ENCODE measurements at regions of chr9 and their contacts with region 1.

Region 1: DNA sequence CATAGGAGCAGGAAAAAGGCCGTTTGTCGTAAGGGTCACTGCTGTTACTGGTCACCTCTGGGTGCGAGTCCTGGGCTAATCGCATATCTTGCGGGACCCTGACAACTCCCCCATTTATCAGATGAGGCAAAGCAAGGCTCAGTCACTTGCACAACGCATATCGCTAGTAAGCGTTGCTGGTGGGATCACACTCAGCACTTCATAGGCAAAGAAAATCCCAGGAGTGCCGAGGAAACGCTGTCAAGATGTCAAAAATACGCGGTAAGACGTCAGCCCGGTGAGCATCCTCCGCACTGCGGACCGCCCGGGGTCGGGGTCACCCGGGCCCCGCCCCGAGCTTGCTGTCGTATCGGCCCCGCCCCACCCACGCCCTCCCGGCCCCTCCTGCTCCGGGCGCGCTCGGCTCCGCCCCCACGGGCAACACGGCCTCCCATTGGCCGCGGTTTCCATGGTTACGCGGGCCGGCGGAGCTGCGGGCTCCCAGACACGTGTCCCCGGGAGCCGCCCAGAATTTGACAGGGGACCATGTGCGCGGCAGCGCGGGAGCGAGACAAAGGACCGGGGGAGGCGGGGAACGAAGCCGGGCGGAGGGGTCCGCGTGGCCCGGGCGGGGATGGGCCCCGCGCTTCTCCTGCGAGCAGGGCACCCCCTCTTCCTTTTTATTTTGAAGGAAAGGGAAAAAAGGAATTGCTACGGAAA is 80.2 kb upstream of the IER5L start:
- DNase-seq: peak; percentile 77 to 97 (median 87)
- ATAC-seq: peak; percentile 89
- H3K4me3 ChIP-seq: peak overlapping the region; percentile 51
- H3K4me3 Mint-ChIP-seq: peak overlapping the region; percentile 80
- H3K27ac ChIP-seq: no peak overlapping the region
- H3K27ac Mint-ChIP-seq: no peak overlapping the region
- H3K4me1 ChIP-seq: peaks cover 34% of the 10 kb centered on the region
- H3K4me1 Mint-ChIP-seq: peaks cover 47% of the 10 kb centered on the region
- H3K27me3 ChIP-seq: peaks cover 0 to 3% of the 10 kb centered on the region in 2 experiments
- H3K27me3 Mint-ChIP-seq: no peaks in the 10 kb centered on the region
- CTCF ChIP-seq: no peak

Region 2: DNA sequence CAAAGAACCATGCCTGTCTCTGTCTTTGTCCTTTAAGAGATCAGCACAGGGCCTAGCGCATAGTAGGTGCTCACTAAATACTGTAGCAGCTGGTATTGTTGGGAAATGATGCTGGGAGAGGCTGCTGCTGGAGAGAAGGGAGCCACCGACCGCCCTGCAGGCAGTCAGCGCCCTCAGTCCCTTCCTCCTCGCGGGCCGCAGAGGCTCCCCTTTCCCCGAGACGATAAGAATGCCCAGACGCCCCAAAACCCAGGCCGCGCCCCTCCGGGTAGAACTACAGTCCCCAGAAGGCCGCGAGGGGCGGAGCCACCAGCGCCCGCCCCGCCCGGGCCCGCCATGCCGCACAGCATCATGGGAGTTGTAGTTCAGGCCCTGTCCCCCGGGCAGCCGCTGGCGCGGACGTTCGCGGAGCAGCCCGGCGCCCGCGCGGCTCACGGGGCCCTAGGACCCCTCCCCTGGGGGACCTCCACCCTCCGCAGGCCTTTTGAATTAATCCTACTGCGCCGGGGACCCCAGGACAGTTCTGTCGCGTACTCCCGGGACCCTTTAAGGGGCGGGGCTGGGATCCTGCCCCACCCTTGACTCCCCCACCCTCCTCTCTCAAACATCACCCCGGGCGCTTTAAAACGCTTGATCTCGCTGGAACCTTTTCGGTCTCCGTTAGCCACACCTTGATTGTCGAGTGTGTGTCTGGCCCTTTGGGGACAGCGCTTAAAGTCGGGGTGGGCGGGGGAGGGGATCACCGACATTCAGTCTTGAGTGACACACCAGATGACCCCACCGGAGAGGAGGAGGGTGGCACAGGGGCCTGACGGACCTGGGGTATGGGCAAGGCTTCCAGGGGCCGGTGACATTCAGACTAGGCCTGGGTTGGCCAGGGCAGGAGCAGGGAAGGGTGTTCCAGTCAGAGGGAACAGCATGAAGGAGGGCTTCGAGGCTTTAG is 55.4 kb before region 1 on chr9:
- CTCF ChIA-PET with region 1: no interaction called
- POLR2A ChIA-PET with region 1: interaction called, 3 read pairs
- intact Hi-C with region 1: loop called in 1 of 2 experiments (anchors 5 kb)
- DNase-seq: peak; percentile 84 to 95 (median 90)
- ATAC-seq: peak; percentile 93
- H3K4me3 ChIP-seq: peak overlapping the region; percentile 54
- H3K4me3 Mint-ChIP-seq: peak overlapping the region; percentile 83
- H3K27ac ChIP-seq: peak overlapping the region in 1 of 2 donors; percentile 41
- H3K27ac Mint-ChIP-seq: peak overlapping the region; percentile 67
- H3K4me1 ChIP-seq: peaks cover 33% of the 10 kb centered on the region
- H3K4me1 Mint-ChIP-seq: peaks cover 18% of the 10 kb centered on the region
- H3K27me3 ChIP-seq: no peaks in the 10 kb centered on the region
- H3K27me3 Mint-ChIP-seq: no peaks in the 10 kb centered on the region
- CTCF ChIP-seq: no peak